ENCODE measurements at regions of chr21 and their contacts with region 1.

Region 1: GRCh38 chr21:21612466-21612865 is 614.3 kb downstream of the NCAM2 start:
- DNase-seq: peak; percentile 79
- ATAC-seq: peak; percentile 98
- H3K4me3 ChIP-seq: no peak overlapping the region
- H3K27ac ChIP-seq: no peak overlapping the region
- H3K4me1 ChIP-seq: no peaks in the 10 kb centered on the region; the same call in 1 of the 2 replicates
- H3K27me3 ChIP-seq: no peaks in the 10 kb centered on the region
- CTCF ChIP-seq: no peak

Region 2: GRCh38 chr21:20627594-20627993 is 984.9 kb before region 1 on chr21:
- CTCF ChIA-PET with region 1: no interaction called
- POLR2A ChIA-PET with region 1: no interaction called
- intact Hi-C with region 1: no loop called
- DNase-seq: no peak
- ATAC-seq: no peak
- H3K4me3 ChIP-seq: no peak overlapping the region
- H3K27ac ChIP-seq: no peak overlapping the region
- H3K4me1 ChIP-seq: peaks cover 4% of the 10 kb centered on the region; the same call in 1 of the 2 replicates
- H3K27me3 ChIP-seq: no peaks in the 10 kb centered on the region
- CTCF ChIP-seq: no peak

Region 3: GRCh38 chr21:21357805-21358204 is 254.7 kb before region 1 on chr21:
- CTCF ChIA-PET with region 1: no interaction called
- POLR2A ChIA-PET with region 1: no interaction called
- intact Hi-C with region 1: no loop called
- DNase-seq: no peak
- ATAC-seq: no peak
- H3K4me3 ChIP-seq: no peak overlapping the region
- H3K27ac ChIP-seq: no peak overlapping the region
- H3K4me1 ChIP-seq: no peaks in the 10 kb centered on the region
- H3K27me3 ChIP-seq: no peaks in the 10 kb centered on the region
- CTCF ChIP-seq: no peak

Region 4: DNA sequence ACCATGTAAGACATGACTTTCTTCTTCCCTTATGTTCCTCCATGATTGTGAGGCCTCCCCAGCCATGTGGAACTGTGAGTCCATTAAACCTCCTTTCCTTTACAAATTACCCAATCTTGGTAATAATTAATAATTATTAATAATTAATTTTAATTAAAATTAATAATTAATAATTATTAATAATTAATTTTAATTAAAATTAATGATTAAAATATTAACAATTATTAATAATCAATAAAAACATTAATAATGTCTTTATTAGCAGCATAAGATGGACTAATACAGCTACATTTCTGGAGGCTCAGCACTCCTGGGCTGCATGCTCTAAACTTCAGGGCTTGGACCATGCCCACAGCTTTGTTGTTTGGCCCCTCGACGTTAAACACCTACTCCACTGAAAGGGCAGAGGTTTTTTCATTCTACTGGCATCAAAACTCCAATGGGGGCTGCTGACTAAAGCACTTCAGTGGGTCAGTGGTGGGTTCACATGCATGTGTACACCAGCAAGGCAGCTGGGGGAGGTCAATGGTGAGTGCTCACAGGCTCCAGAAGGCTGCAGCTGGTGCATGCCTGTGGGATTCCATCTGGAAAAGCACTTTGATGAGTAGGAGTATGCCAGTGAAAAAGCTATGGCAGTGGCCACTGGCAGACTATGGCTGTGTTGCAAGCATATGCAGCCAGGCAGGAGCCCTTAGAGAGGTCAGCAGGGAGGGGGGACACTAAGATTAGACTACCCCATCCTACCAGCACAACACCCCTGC is 53.0 kb before region 1 on chr21:
- CTCF ChIA-PET with region 1: no interaction called
- POLR2A ChIA-PET with region 1: no interaction called
- intact Hi-C with region 1: loop called (anchors 10 kb)
- DNase-seq: no peak
- ATAC-seq: no peak
- H3K4me3 ChIP-seq: no peak overlapping the region
- H3K27ac ChIP-seq: no peak overlapping the region
- H3K4me1 ChIP-seq: no peaks in the 10 kb centered on the region
- H3K27me3 ChIP-seq: no peaks in the 10 kb centered on the region
- CTCF ChIP-seq: no peak

Region 5: DNA sequence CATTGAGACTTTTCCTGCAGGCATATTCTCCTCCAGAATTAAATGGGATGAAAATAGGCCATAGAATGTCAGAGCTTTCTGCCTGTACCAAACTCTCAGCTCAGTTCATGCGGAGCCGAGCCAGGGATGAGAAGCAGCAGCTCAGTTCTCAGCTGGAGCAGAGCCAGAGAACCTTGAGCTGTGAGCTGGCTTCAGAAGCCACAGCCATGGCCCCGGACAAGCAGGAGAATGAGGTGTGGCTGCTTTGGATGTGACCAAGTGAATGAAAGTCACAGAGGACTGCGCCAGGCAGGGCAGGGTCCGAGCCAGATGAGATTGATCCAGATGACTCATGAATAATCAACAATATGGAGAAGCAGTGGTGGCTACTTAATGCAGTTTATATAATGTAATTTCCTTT is 19.5 kb after region 1 on chr21:
- CTCF ChIA-PET with region 1: no interaction called
- POLR2A ChIA-PET with region 1: no interaction called
- intact Hi-C with region 1: no loop called
- DNase-seq: peak; percentile 31
- ATAC-seq: peak; percentile 85
- H3K4me3 ChIP-seq: no peak overlapping the region
- H3K27ac ChIP-seq: no peak overlapping the region
- H3K4me1 ChIP-seq: no peaks in the 10 kb centered on the region
- H3K27me3 ChIP-seq: no peaks in the 10 kb centered on the region
- CTCF ChIP-seq: no peak

Region 6: GRCh38 chr21:21722731-21723130 is 110.3 kb after region 1 on chr21:
- CTCF ChIA-PET with region 1: no interaction called
- POLR2A ChIA-PET with region 1: no interaction called
- intact Hi-C with region 1: no loop called
- DNase-seq: no peak
- ATAC-seq: no peak
- H3K4me3 ChIP-seq: no peak overlapping the region
- H3K27ac ChIP-seq: no peak overlapping the region
- H3K4me1 ChIP-seq: no peaks in the 10 kb centered on the region
- H3K27me3 ChIP-seq: no peaks in the 10 kb centered on the region
- CTCF ChIP-seq: no peak

Measured in PC-3 (cell line).